BJ (cell line): ENCODE measurements at regions of chr2 and their contacts with region 1.

Region 1: GRCh38 chr2:147030966-147031720 is 813.7 kb upstream of the ACVR2A start:
- DNase-seq: no peak
- H3K4me3 ChIP-seq: no peak overlapping the region
- H3K27me3 ChIP-seq: no peaks in the 10 kb centered on the region
- CTCF ChIP-seq: no peak

Region 2: DNA sequence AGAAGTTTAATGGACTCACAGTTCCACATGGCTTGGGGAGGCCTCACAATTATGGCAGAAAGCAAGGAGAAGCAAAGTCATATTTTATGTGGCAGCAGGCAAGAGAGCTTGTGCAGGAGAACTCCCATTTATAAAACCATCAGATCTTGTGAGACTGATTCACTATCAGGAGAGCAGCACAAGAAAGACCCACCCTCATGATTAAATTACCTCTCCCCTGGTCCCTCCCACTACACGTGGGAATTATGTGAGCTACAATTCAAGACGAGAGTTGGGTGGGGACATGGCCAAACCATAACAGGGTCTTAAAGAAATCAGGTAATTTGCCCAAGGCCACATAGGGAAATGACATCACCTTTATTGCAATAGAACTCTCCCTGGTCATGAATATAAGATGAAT is 259.6 kb before region 1 on chr2:
- CTCF ChIA-PET with region 1: no interaction called
- POLR2A ChIA-PET with region 1: no interaction called
- DNase-seq: no peak
- H3K4me3 ChIP-seq: no peak overlapping the region
- H3K27me3 ChIP-seq: no peaks in the 10 kb centered on the region
- CTCF ChIP-seq: no peak

Region 3: GRCh38 chr2:146934921-146935320 is 96.2 kb before region 1 on chr2:
- CTCF ChIA-PET with region 1: no interaction called
- POLR2A ChIA-PET with region 1: no interaction called
- DNase-seq: no peak
- H3K4me3 ChIP-seq: no peak overlapping the region
- H3K27me3 ChIP-seq: no peaks in the 10 kb centered on the region
- CTCF ChIP-seq: no peak

Region 4: GRCh38 chr2:147045113-147045512 is 14.0 kb after region 1 on chr2:
- CTCF ChIA-PET with region 1: interaction called, 13 read pairs
- POLR2A ChIA-PET with region 1: no interaction called
- DNase-seq: no peak
- H3K4me3 ChIP-seq: no peak overlapping the region
- H3K27me3 ChIP-seq: no peaks in the 10 kb centered on the region
- CTCF ChIP-seq: peak; percentile 65